Caco-2 (cell line): ENCODE measurements at regions of chr2 and their contacts with region 1.

Region 1: DNA sequence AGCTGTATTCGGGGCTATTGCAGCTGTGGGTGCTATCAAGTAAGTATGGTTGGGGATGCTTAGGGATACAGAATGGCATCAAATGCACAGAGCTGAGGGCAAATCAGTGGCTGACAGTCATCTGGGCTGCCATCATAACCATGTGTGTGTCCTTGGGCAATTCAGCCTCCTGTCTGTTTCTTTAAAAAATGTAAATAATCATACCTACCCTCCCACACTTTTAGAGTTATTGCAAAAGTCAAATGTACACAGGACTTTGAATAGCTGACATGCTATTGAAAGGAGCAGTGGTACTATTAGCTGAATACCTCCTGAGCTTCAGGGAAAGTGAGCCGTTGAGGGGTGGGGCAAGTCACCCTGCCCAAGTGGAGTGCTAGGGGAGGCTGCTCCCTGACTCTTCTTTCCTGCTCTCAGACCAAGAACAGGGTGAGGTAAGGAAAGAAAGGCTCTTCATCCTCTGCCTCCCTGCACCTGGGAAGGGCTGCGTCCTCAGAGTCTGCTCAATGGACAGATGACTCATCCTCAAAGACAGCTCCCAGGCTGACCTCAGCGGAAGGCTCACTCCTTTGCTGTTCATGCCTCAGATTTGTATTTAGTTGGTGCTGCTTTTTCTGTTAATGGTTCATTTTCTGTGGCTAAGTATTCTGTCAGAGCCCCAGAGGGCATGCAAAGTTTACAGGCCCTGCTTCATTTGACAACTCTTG is 54.9 kb upstream of the BZW1 start:
- DNase-seq: peak; percentile 85 to 90
- H3K4me3 ChIP-seq: no peak overlapping the region
- H3K4me3 Mint-ChIP-seq: peak overlapping the region; percentile 65
- H3K27ac Mint-ChIP-seq: peak overlapping the region; percentile 80
- H3K4me1 ChIP-seq: peaks cover 51% of the 10 kb centered on the region
- H3K4me1 Mint-ChIP-seq: peaks cover 54% of the 10 kb centered on the region
- H3K27me3 ChIP-seq: no peaks in the 10 kb centered on the region
- H3K27me3 Mint-ChIP-seq: no peaks in the 10 kb centered on the region
- CTCF ChIP-seq: no peak

Region 2: GRCh38 chr2:200742426-200742825 is 14.3 kb before region 1 on chr2:
- CTCF ChIA-PET with region 1: interaction called, 15 read pairs
- POLR2A ChIA-PET with region 1: interaction called, 20 read pairs
- intact Hi-C with region 1: loop called (anchors 1 kb)
- DNase-seq: no peak
- H3K4me3 ChIP-seq: no peak overlapping the region
- H3K4me3 Mint-ChIP-seq: no peak overlapping the region
- H3K27ac Mint-ChIP-seq: peak overlapping the region; percentile 98
- H3K4me1 ChIP-seq: peaks cover 45% of the 10 kb centered on the region
- H3K4me1 Mint-ChIP-seq: peaks cover 43% of the 10 kb centered on the region
- H3K27me3 ChIP-seq: no peaks in the 10 kb centered on the region
- H3K27me3 Mint-ChIP-seq: no peaks in the 10 kb centered on the region
- CTCF ChIP-seq: no peak